H1 (cell line): ENCODE measurements at regions of chr1 and their contacts with region 1.

Region 1: GRCh38 chr1:210250998-210251679 is 18.5 kb downstream of the SERTAD4 start:
- DNase-seq: peak; percentile 83 to 86
- H3K4me3 ChIP-seq: peak overlapping the region; percentile 62 to 67 (median 66)
- H3K27ac ChIP-seq: no peak overlapping the region
- H3K4me1 ChIP-seq: peaks cover 0 to 17% (median 11%) of the 10 kb centered on the region in 4 experiments; a peak in 5 of 7 replicates
- H3K27me3 ChIP-seq: peaks cover 0 to 22% (median 17%) of the 10 kb centered on the region in 4 experiments; a peak in 6 of 7 replicates
- CTCF ChIP-seq: no peak
- EP300 ChIP-seq: 0 out of 3 replicates have a peak, but pooled peaks of 1 of the 2 experiments have one; percentile 26
- POLR2A ChIP-seq: no peak; a peak in 1 of 3 replicates
- RAD21 ChIP-seq: no peak

Region 2: DNA sequence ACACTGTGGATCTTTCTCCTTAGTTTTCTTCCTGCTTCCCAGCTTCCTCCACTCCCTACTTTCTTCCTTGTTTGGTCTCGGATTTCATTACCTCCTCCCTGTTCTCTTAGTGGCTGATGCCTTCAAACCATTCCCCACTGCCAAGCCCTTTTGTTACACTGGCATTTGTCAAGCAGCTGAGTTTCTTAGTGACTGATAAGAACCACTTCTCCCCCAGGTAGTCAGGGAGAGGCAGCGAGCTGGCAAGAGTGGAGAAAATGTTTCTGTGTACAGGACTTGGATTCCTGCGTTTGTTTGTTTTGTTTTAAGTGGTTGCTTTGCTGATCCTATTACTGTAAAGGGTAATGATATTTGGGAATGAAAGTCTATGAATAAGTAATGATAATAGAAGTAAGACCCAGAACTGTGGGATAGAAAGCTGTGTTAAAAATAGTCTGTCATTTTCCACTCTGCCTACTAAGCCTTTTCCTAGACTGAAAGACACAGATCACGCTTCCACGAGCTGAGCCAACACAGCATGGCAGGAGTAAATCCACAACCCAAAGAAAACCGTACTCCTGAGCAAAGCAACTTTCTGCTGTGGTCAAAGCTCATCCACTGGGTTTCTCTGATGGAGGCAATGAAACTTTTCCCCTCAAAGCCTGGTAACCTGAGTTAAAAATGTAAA is 28.7 kb before region 1 on chr1:
- CTCF ChIA-PET with region 1: interaction called, 3 read pairs
- POLR2A ChIA-PET with region 1: interaction called, 12 read pairs
- DNase-seq: no peak
- H3K4me3 ChIP-seq: no peak overlapping the region
- H3K27ac ChIP-seq: no peak overlapping the region
- H3K4me1 ChIP-seq: peaks cover 0 to 3% (median 0%) of the 10 kb centered on the region in 4 experiments; a peak in 1 of 7 replicates
- H3K27me3 ChIP-seq: no peaks in the 10 kb centered on the region; a peak in 1 of 7 replicates
- CTCF ChIP-seq: no peak
- EP300 ChIP-seq: no peak
- POLR2A ChIP-seq: no peak
- RAD21 ChIP-seq: no peak

Region 3: DNA sequence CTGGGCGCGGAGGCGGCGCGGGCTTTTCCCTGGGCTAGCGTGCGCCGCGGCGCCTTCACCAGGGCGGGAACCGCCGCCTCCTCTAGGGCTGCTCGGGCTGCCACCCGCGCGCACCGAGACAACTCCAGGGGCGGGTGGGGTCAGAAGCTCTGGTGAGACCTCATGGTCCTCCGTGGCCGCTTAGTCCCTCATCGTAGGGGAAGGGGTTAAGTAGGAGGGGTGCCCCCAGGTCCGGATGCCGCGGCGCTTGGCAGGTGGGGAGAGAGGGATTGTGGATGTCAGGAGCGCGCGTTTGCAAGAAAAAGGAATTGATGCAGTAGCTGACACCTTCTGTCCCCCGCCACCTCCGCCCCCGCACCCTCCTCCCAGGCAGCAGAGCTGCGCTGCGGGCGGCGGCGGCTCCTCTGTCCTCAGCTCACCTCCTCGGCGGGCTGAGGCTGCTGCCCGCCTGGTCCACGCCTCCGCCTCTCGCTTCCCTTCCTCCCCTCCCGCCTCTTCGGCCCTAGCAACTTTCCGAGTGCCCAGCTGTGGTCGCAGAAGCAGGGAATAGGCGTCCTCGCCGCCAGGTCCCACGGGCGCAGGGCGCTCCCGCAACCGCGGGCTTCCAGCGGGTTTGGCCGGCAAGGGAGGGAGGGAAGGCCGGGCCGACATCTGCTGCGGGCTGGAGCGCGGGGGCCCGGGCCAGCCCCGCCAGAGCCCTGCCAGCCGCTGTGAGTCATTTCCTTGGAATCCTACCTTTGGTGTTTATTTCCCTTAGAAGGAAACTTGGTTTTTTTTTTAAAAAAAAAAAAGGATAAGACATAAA is 17.7 kb before region 1 on chr1:
- CTCF ChIA-PET with region 1: interaction called, 8 read pairs
- POLR2A ChIA-PET with region 1: interaction called, 29 read pairs
- DNase-seq: peak in 1 of 2 experiments; percentile 76
- H3K4me3 ChIP-seq: peak overlapping the region; percentile 54 to 64 (median 62)
- H3K27ac ChIP-seq: no peak overlapping the region
- H3K4me1 ChIP-seq: peaks cover 2 to 19% (median 9%) of the 10 kb centered on the region in 4 experiments; a peak in 6 of 7 replicates
- H3K27me3 ChIP-seq: peaks cover 2 to 59% (median 28%) of the 10 kb centered on the region in 4 experiments
- CTCF ChIP-seq: no peak
- EP300 ChIP-seq: no peak
- POLR2A ChIP-seq: no peak
- RAD21 ChIP-seq: no peak

Region 4: DNA sequence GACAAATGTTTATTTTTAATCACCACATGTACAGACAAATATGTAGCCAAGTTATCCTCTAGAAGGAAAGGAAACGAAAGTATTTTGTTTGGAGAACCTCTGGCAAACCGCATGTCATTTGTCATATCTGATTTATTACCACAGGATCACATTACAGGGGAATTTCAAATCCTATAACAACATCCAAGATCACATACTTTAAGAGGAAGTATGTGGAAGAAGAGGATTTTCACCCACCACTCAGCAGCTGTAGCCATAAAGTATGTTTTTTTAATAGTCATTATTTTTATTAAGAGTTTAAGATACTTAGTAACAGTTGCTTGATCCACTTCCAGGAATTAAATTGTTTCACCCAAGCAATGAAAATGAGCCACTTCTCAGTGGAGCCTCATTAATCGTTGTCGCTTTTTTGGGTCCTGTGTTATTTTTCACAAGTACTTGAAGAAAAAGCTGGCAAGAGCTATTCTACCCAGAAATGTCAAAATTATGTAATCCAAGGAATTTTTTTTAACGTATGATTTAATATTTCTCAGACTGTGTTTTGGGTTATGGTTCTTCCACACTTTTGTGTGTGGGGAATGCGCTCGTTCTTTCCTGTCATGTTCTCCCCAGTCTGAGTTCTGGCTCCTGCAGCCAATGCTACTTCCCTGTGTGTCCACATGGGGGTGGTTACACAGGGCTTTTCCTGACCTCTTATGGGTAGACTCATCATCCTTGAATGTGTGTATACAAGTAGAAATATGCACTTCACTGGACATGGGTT is 11.6 kb before region 1 on chr1:
- CTCF ChIA-PET with region 1: interaction called, 12 read pairs
- POLR2A ChIA-PET with region 1: interaction called, 29 read pairs
- DNase-seq: no peak
- H3K4me3 ChIP-seq: no peak overlapping the region
- H3K27ac ChIP-seq: no peak overlapping the region
- H3K4me1 ChIP-seq: peaks cover 0 to 14% (median 6%) of the 10 kb centered on the region in 4 experiments; a peak in 5 of 7 replicates
- H3K27me3 ChIP-seq: peaks cover 0 to 20% (median 6%) of the 10 kb centered on the region in 4 experiments; a peak in 4 of 7 replicates
- CTCF ChIP-seq: peak; percentile 58 to 68 (median 60)
- EP300 ChIP-seq: no peak
- POLR2A ChIP-seq: no peak
- RAD21 ChIP-seq: peak; percentile 55 to 62

Region 5: GRCh38 chr1:210262167-210262896 is 11.2 kb after region 1 on chr1:
- CTCF ChIA-PET with region 1: interaction called, 74 read pairs
- POLR2A ChIA-PET with region 1: interaction called, 31 read pairs
- DNase-seq: no peak
- H3K4me3 ChIP-seq: no peak overlapping the region
- H3K27ac ChIP-seq: no peak overlapping the region
- H3K4me1 ChIP-seq: peaks cover 0 to 13% (median 2%) of the 10 kb centered on the region in 4 experiments; a peak in 2 of 7 replicates
- H3K27me3 ChIP-seq: no peaks in the 10 kb centered on the region
- CTCF ChIP-seq: no peak
- EP300 ChIP-seq: no peak
- POLR2A ChIP-seq: no peak
- RAD21 ChIP-seq: no peak

Region 6: GRCh38 chr1:210272666-210273065 is 21.5 kb after region 1 on chr1:
- CTCF ChIA-PET with region 1: interaction called, 74 read pairs
- POLR2A ChIA-PET with region 1: interaction called, 31 read pairs
- DNase-seq: peak in 1 of 2 experiments; percentile 61
- H3K4me3 ChIP-seq: no peak overlapping the region
- H3K27ac ChIP-seq: no peak overlapping the region
- H3K4me1 ChIP-seq: peaks cover 3 to 15% (median 10%) of the 10 kb centered on the region in 4 experiments; a peak in 6 of 7 replicates
- H3K27me3 ChIP-seq: no peaks in the 10 kb centered on the region
- CTCF ChIP-seq: no peak
- EP300 ChIP-seq: no peak
- POLR2A ChIP-seq: no peak
- RAD21 ChIP-seq: 0 out of 4 replicates have a peak, but pooled peaks of 1 of the 2 experiments have one; percentile 6

Region 7: DNA sequence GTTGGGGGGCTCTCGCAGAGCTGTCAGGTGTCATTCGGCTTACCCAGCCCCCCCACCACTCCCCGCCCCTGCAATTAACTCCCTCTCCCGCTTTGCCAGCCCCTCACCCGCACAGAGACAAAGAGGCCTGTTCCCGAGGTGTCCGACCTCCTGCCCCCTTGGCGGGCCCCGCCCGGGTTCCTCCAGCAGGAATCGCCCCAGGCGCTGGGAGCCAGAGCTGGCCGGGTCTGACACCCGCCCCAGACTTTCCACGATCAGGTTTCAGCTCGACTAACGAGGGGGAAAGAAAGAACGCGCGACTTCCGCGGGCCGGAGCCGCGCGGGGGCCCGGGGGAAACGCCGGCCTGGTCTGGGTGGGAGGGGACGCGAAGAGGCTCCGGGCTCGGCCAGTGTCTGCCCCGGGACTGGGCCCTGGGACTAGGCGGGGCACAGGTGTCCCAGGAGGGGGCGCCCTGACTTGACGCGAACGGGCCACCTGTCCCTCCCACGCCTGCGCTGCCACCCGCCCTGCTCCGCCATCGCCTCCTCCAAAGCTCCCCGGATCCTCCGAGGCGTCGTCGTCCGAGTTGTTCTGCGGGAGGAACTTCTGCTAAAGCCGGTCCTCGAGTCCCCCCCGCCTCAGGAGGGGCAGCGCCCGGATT is 41.2 kb after region 1 on chr1:
- CTCF ChIA-PET with region 1: interaction called, 25 read pairs
- POLR2A ChIA-PET with region 1: interaction called, 39 read pairs
- DNase-seq: peak in 1 of 2 experiments; percentile 89
- H3K4me3 ChIP-seq: peak overlapping the region; percentile 42 to 68 (median 50)
- H3K27ac ChIP-seq: no peak overlapping the region
- H3K4me1 ChIP-seq: peaks cover 0 to 13% (median 6%) of the 10 kb centered on the region in 4 experiments; a peak in 5 of 7 replicates
- H3K27me3 ChIP-seq: peaks cover 0 to 13% (median 9%) of the 10 kb centered on the region in 4 experiments; a peak in 4 of 7 replicates
- CTCF ChIP-seq: peak; percentile 37 to 75 (median 55)
- EP300 ChIP-seq: no peak
- POLR2A ChIP-seq: no peak
- RAD21 ChIP-seq: peak in 1 of 2 experiments; percentile 47; a peak in 2 of 4 replicates